B cell (primary cell): ENCODE measurements at regions of chr11 and their contacts with region 1.

Region 1: GRCh38 chr11:65888163-65888814 is at the start of gene FIBP:
- DNase-seq: peak; percentile 96
- ATAC-seq: peak; percentile 64
- H3K4me3 ChIP-seq: peak within 1 kb of the TSS; percentile 63 to 88 (median 75)
- H3K4me3 Mint-ChIP-seq: peak within 1 kb of the TSS; percentile 98
- H3K27ac ChIP-seq: peak within 1 kb of the TSS; percentile 85
- H3K27ac Mint-ChIP-seq: peak within 1 kb of the TSS; percentile 98
- H3K4me1 ChIP-seq: peaks cover 47 to 63% of the 10 kb centered on the region in 2 donors
- H3K4me1 Mint-ChIP-seq: peaks cover 66% of the 10 kb centered on the region
- H3K27me3 ChIP-seq: no peaks in the 10 kb centered on the region
- H3K27me3 Mint-ChIP-seq: no peaks in the 10 kb centered on the region
- CTCF ChIP-seq: peak; percentile 86
- total RNA-seq, gene FIBP: 59.8 and 63.4 TPM in 2 replicates

Region 2: GRCh38 chr11:65060913-65061408 is 827.3 kb before region 1 on chr11:
- CTCF ChIA-PET with region 1: no interaction called
- POLR2A ChIA-PET with region 1: no interaction called
- intact Hi-C with region 1: no loop called
- DNase-seq: no peak
- ATAC-seq: no peak
- H3K4me3 ChIP-seq: no peak overlapping the region
- H3K4me3 Mint-ChIP-seq: no peak overlapping the region
- H3K27ac ChIP-seq: no peak overlapping the region
- H3K27ac Mint-ChIP-seq: peak overlapping the region; percentile 32
- H3K4me1 ChIP-seq: no peaks in the 10 kb centered on the region
- H3K4me1 Mint-ChIP-seq: no peaks in the 10 kb centered on the region
- H3K27me3 ChIP-seq: peaks cover 0 to 2% (median 0%) of the 10 kb centered on the region in 4 experiments
- H3K27me3 Mint-ChIP-seq: no peaks in the 10 kb centered on the region
- CTCF ChIP-seq: no peak

Region 3: DNA sequence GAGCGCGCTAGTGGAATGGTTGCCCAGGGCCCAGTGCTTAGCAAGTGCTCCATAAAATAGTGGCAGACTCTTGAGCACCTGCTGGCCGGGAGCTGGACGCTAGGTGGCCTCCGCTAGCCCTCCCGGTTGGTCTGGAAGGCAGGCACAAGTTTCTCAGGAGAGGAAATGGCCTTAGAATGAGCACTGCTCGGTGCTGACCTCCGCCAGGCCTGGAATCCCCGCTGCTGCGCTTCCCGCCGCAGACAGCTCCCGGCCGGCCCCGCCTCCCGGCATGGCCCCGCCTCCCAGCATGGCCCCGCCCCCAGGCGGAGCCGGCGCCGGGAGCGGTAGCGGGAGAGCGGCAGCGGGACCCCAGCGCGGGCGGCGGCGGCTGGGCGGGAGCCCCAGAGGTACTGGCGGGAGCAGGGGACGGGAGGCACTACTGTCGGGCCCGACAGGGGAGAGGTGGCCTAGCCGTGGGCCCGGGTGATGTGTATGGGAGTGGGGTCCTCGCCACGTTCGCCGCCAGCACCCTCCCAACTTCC is 250.4 kb before region 1 on chr11 and contains the start of gene SIPA1:
- CTCF ChIA-PET with region 1: no interaction called
- POLR2A ChIA-PET with region 1: interaction called, 10 read pairs
- intact Hi-C with region 1: no loop called
- DNase-seq: peak; percentile 88
- ATAC-seq: peak; percentile 32
- H3K4me3 ChIP-seq: peak within 1 kb of the TSS; percentile 70 to 97 (median 93)
- H3K4me3 Mint-ChIP-seq: peak within 1 kb of the TSS; percentile 99
- H3K27ac ChIP-seq: peak within 1 kb of the TSS; percentile 100
- H3K27ac Mint-ChIP-seq: peak within 1 kb of the TSS; percentile 98
- H3K4me1 ChIP-seq: peaks cover 37 to 66% of the 10 kb centered on the region in 2 donors
- H3K4me1 Mint-ChIP-seq: peaks cover 42% of the 10 kb centered on the region
- H3K27me3 ChIP-seq: no peaks in the 10 kb centered on the region
- H3K27me3 Mint-ChIP-seq: no peaks in the 10 kb centered on the region
- CTCF ChIP-seq: no peak
- total RNA-seq, gene SIPA1: 448 and 461 TPM in 2 replicates

Region 4: GRCh38 chr11:65779851-65780577 is 108.3 kb before region 1 on chr11:
- CTCF ChIA-PET with region 1: interaction called, 20 read pairs
- POLR2A ChIA-PET with region 1: no interaction called
- intact Hi-C with region 1: no loop called
- DNase-seq: peak; percentile 87
- ATAC-seq: peak; percentile 65
- H3K4me3 ChIP-seq: peak overlapping the region; percentile 42 to 81 (median 74)
- H3K4me3 Mint-ChIP-seq: peak overlapping the region; percentile 89
- H3K27ac ChIP-seq: peak overlapping the region; percentile 16 to 79
- H3K27ac Mint-ChIP-seq: peak overlapping the region; percentile 83
- H3K4me1 ChIP-seq: peaks cover 12 to 18% of the 10 kb centered on the region in 2 donors
- H3K4me1 Mint-ChIP-seq: peaks cover 15% of the 10 kb centered on the region
- H3K27me3 ChIP-seq: no peaks in the 10 kb centered on the region
- H3K27me3 Mint-ChIP-seq: no peaks in the 10 kb centered on the region
- CTCF ChIP-seq: peak; percentile 100

Region 5: GRCh38 chr11:65859200-65859811 is 29.0 kb before region 1 on chr11:
- CTCF ChIA-PET with region 1: interaction called, 244 read pairs
- POLR2A ChIA-PET with region 1: interaction called, 65 read pairs
- intact Hi-C with region 1: loop called (anchors 1 kb)
- DNase-seq: peak; percentile 97
- ATAC-seq: peak; percentile 62
- H3K4me3 ChIP-seq: peak overlapping the region; percentile 81 to 98 (median 95)
- H3K4me3 Mint-ChIP-seq: peak overlapping the region; percentile 92
- H3K27ac ChIP-seq: peak overlapping the region; percentile 77 to 89
- H3K27ac Mint-ChIP-seq: peak overlapping the region; percentile 98
- H3K4me1 ChIP-seq: peaks cover 27 to 54% of the 10 kb centered on the region in 2 donors
- H3K4me1 Mint-ChIP-seq: peaks cover 47% of the 10 kb centered on the region
- H3K27me3 ChIP-seq: no peaks in the 10 kb centered on the region
- H3K27me3 Mint-ChIP-seq: no peaks in the 10 kb centered on the region
- CTCF ChIP-seq: no peak

Region 6: GRCh38 chr11:65919146-65920033 is 31.1 kb after region 1 on chr11 and contains the start of gene DRAP1:
- CTCF ChIA-PET with region 1: interaction called, 15 read pairs
- POLR2A ChIA-PET with region 1: interaction called, 13 read pairs
- intact Hi-C with region 1: loop called (anchors 1 kb)
- DNase-seq: peak; percentile 98
- ATAC-seq: peak; percentile 87
- H3K4me3 ChIP-seq: peak within 1 kb of the TSS; percentile 83 to 99 (median 93)
- H3K4me3 Mint-ChIP-seq: peak within 1 kb of the TSS; percentile 95
- H3K27ac ChIP-seq: peak within 1 kb of the TSS; percentile 66 to 85
- H3K27ac Mint-ChIP-seq: peak within 1 kb of the TSS; percentile 89
- H3K4me1 ChIP-seq: peaks cover 19 to 50% of the 10 kb centered on the region in 2 donors
- H3K4me1 Mint-ChIP-seq: peaks cover 44% of the 10 kb centered on the region
- H3K27me3 ChIP-seq: no peaks in the 10 kb centered on the region
- H3K27me3 Mint-ChIP-seq: no peaks in the 10 kb centered on the region
- CTCF ChIP-seq: no peak
- total RNA-seq, gene DRAP1: 62.9 and 71.7 TPM in 2 replicates

Region 7: DNA sequence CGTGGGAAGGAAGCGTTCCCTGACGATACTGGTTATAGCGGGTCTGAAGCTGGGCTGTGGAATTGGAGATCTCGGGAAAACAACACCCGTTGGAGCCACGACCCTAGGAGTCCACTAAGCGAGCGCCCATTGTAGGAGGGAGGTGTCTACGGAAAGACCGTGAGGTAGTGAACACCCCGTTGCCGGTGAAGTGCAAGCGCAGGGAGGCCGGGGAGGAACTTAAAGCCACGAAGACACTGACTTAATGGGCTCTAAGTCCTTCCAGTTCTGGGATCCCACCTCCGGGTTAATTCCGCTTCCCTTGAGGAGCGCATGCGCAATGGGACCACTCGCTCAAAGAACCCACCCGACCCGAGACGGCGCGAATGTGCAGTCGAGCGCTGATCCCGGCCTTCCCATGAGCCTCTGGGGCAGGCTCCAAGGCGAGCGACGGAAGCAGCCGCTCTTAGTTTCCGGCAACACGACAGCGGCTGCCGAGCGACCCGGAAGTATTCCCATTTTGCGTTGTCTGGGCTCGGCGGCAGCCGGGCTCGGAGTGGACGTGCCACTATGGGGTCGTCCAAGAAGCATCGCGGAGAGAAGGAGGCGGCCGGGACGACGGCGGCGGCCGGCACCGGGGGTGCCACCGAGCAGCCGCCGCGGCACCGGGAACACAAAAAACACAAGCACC is 73.1 kb after region 1 on chr11 and contains the start of gene SART1:
- CTCF ChIA-PET with region 1: interaction called, 27 read pairs
- POLR2A ChIA-PET with region 1: interaction called, 9 read pairs
- intact Hi-C with region 1: loop called (anchors 1 kb)
- DNase-seq: peak; percentile 97
- ATAC-seq: peak; percentile 90
- H3K4me3 ChIP-seq: peak within 1 kb of the TSS; percentile 74 to 90 (median 87)
- H3K4me3 Mint-ChIP-seq: peak within 1 kb of the TSS; percentile 98
- H3K27ac ChIP-seq: peak within 1 kb of the TSS; percentile 77 to 89
- H3K27ac Mint-ChIP-seq: peak within 1 kb of the TSS; percentile 98
- H3K4me1 ChIP-seq: peaks cover 35 to 47% of the 10 kb centered on the region in 2 donors
- H3K4me1 Mint-ChIP-seq: peaks cover 52% of the 10 kb centered on the region
- H3K27me3 ChIP-seq: no peaks in the 10 kb centered on the region
- H3K27me3 Mint-ChIP-seq: no peaks in the 10 kb centered on the region
- CTCF ChIP-seq: no peak
- total RNA-seq, gene SART1: 97.4 and 102 TPM in 2 replicates

Region 8: GRCh38 chr11:66001942-66002647 is 113.8 kb after region 1 on chr11 and contains the starts of genes BANF1 and EIF1AD:
- CTCF ChIA-PET with region 1: interaction called, 9 read pairs
- POLR2A ChIA-PET with region 1: interaction called, 8 read pairs
- intact Hi-C with region 1: loop called (anchors 1 kb)
- DNase-seq: peak; percentile 98
- ATAC-seq: peak; percentile 80
- H3K4me3 ChIP-seq: peak within 1 kb of the TSS; percentile 75 to 100 (median 96)
- H3K4me3 Mint-ChIP-seq: peak within 1 kb of the TSS; percentile 98
- H3K27ac ChIP-seq: peak within 1 kb of the TSS; percentile 89 to 94
- H3K27ac Mint-ChIP-seq: peak within 1 kb of the TSS; percentile 99
- H3K4me1 ChIP-seq: peaks cover 16 to 25% of the 10 kb centered on the region in 2 donors
- H3K4me1 Mint-ChIP-seq: peaks cover 34% of the 10 kb centered on the region
- H3K27me3 ChIP-seq: no peaks in the 10 kb centered on the region
- H3K27me3 Mint-ChIP-seq: no peaks in the 10 kb centered on the region
- CTCF ChIP-seq: no peak
- total RNA-seq, gene BANF1: 99.3 and 99.5 TPM in 2 replicates
- total RNA-seq, gene EIF1AD: 61.0 and 65.2 TPM in 2 replicates